Uterus (tissue), 4 donors: ENCODE measurements at regions of chr1 and their contacts with region 1.

Region 1: DNA sequence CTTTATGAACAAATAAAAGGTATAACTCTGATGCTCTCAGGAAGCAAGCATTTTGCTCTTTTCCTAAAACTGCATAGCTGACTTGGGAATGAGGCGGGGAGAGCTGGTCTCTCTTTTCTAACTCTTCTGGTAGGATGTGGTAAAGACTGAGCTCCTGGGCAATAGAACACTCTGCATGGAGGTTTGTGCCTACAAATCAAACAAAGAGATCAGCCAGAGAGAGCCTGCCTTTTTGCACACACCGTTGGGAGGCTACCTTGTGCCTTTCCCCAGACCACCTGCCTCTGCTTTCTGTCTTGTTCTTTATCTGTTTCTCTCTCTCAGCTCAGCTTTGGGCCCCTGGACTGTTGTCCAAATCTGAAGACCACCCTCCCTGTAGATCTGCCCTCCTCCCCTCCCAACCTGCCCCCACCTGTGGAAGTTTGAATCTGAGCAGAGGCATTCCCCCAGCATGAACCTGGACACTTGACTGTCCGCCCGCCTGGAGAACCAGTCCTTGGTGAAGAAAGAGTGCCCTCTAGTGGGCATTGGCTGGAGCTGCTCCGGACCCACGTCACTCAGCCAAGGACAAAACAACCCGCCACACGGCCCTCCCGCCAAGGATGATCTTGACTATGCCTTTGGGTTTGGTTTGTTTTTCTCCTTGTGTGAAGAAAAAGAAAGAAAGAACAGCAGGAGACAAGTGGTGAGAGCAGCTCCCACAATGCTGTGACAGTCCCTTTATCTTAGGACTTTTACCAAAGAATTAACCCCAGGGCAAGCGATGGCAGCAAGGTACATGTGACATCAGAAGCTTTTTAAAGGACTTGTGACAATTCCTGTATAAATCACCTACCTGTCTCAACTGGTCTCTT is 228.2 kb downstream of the PBX1 start:
- DNase-seq: peak; percentile 89 to 94
- H3K4me3 ChIP-seq: no peak overlapping the region
- H3K27ac ChIP-seq: peak overlapping the region; percentile 92 to 94
- H3K4me1 ChIP-seq: peaks cover 18 to 19% of the 10 kb centered on the region in 2 donors
- H3K27me3 ChIP-seq: no peaks in the 10 kb centered on the region
- CTCF ChIP-seq: peak; percentile 87 to 95 (median 92)
- POLR2A ChIP-seq: no peak

Region 2: GRCh38 chr1:164588516-164589341 is 198.5 kb before region 1 on chr1:
- intact Hi-C with region 1: loop called (anchors 10 kb)
- DNase-seq: peak; percentile 81 to 88
- H3K4me3 ChIP-seq: peak overlapping the region; percentile 1 to 34
- H3K27ac ChIP-seq: peak overlapping the region; percentile 88 to 94
- H3K4me1 ChIP-seq: peaks cover 15 to 20% of the 10 kb centered on the region in 2 donors
- H3K27me3 ChIP-seq: no peaks in the 10 kb centered on the region
- CTCF ChIP-seq: no peak
- POLR2A ChIP-seq: no peak

Region 3: DNA sequence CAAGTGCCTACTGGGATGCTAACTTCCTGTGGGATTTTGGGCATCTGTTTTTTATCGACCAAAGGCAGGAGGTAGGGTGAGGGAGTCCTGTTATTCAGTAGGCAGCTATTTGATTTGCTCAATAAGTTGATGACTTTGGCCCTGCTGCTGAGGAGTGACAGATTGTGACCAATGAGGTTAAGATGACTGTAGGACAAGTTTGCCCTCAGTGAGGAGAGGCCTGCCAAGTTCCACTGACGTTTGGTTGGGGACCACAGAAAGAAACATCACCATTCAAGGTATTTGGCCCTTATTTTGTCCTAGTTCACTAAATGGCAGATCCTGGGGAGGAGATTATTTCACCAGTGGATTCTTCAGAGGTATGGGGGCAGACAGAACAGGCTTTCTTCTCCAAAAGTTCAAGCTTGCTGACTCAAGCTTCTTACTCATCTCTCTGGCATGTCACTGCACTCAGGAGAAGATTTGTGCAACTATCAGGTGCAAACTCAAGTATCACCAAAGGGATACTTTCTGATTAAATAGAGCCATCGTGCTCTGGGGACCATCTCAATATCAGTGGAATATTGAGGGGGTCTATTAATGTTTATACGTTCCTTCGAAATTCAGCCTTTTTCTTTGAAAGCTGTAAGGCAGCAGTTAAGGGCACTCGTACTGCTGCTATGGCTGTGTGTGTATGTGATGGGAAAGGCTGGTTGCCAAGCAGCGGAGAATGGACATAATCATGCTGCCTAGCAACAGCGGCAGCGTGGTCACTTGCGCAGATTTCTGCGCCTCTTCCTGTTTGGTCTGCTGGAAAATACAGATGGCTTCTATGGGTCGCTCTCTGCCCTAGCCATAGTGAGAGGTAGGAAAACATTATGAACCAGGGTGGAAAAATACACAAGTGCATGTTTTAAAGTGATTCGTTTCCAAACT is 149.5 kb before region 1 on chr1:
- intact Hi-C with region 1: loop called (anchors 10 kb)
- DNase-seq: peak in 1 of 2 donors; percentile 57
- H3K4me3 ChIP-seq: no peak overlapping the region
- H3K27ac ChIP-seq: peak overlapping the region; percentile 83 to 89
- H3K4me1 ChIP-seq: peaks cover 18 to 45% of the 10 kb centered on the region in 2 donors
- H3K27me3 ChIP-seq: no peaks in the 10 kb centered on the region
- CTCF ChIP-seq: no peak
- POLR2A ChIP-seq: no peak

Region 4: GRCh38 chr1:164699815-164700491 is 87.3 kb before region 1 on chr1:
- intact Hi-C with region 1: loop called (anchors 10 kb)
- DNase-seq: peak in 1 of 2 donors; percentile 73
- H3K4me3 ChIP-seq: no peak overlapping the region
- H3K27ac ChIP-seq: peak overlapping the region; percentile 85 to 92
- H3K4me1 ChIP-seq: peaks cover 0 to 36% of the 10 kb centered on the region in 2 donors
- H3K27me3 ChIP-seq: no peaks in the 10 kb centered on the region
- CTCF ChIP-seq: no peak
- POLR2A ChIP-seq: no peak